Activated CD8-positive, alpha-beta T cell treated with anti-CD3 and anti-CD28 coated beads for 36 hours (primary cell): ENCODE measurements at regions of chr16 and their contacts with region 1.

Region 1: GRCh38 chr16:72066747-72067146 is 3.7 kb downstream of the HPR start:
- DNase-seq: no peak
- ATAC-seq: peak; percentile 58
- H3K4me3 Mint-ChIP-seq: no peak overlapping the region
- H3K27ac Mint-ChIP-seq: no peak overlapping the region
- H3K4me1 Mint-ChIP-seq: no peaks in the 10 kb centered on the region
- H3K27me3 Mint-ChIP-seq: no peaks in the 10 kb centered on the region
- CTCF ChIP-seq: peak; percentile 33

Region 2: GRCh38 chr16:71985262-71985974 is 81.3 kb before region 1 on chr16:
- CTCF ChIA-PET with region 1: no interaction called
- POLR2A ChIA-PET with region 1: no interaction called
- intact Hi-C with region 1: no loop called
- DNase-seq: no peak
- ATAC-seq: no peak
- H3K4me3 Mint-ChIP-seq: no peak overlapping the region
- H3K27ac Mint-ChIP-seq: no peak overlapping the region
- H3K4me1 Mint-ChIP-seq: no peaks in the 10 kb centered on the region
- H3K27me3 Mint-ChIP-seq: peaks cover 23% of the 10 kb centered on the region
- CTCF ChIP-seq: no peak

Region 3: DNA sequence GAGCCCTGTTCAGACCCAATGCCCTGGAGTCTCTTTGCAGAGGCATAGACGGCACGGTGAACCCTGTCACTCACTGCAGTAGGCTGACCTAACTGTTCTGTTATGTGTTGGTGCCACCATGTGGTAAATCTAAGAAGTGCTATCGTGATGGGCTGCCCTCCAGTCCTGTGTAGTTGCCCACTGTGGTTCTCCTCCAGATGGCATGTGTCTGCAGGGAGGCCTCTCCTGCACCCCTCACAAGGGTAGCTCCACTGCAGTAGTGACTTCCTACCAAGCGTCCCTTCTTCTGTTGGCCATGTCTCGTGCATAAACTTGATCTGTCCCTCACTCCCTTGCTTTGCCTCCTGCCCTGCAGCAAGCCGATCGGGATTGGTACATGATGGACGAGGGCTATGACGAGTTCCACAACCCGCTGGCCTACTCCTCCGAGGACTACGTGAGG is 32.7 kb after region 1 on chr16:
- CTCF ChIA-PET with region 1: interaction called, 10 read pairs
- POLR2A ChIA-PET with region 1: interaction called, 3 read pairs
- intact Hi-C with region 1: loop called (anchors 5 kb)
- DNase-seq: peak; percentile 72
- ATAC-seq: peak; percentile 97
- H3K4me3 Mint-ChIP-seq: no peak overlapping the region
- H3K27ac Mint-ChIP-seq: no peak overlapping the region
- H3K4me1 Mint-ChIP-seq: peaks cover 21% of the 10 kb centered on the region
- H3K27me3 Mint-ChIP-seq: no peaks in the 10 kb centered on the region
- CTCF ChIP-seq: peak; percentile 60

Region 4: DNA sequence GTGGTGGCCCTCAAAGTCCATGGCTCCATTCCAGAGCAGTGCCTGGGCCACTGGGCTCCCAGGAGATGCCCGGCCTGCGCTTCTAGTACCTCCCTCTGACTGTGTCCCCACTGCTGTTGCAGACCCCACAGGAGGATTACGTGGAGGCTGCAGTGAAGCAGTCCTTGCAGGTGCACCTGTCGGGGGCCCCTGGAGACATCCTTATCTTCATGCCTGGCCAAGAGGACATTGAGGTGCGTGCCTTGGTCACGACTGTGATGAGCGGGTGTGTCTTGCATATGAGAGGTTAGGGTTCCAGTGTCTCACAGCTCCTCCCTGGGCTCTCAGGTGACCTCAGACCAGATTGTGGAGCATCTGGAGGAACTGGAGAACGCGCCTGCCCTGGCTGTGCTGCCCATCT is 38.2 kb after region 1 on chr16:
- CTCF ChIA-PET with region 1: interaction called, 10 read pairs
- POLR2A ChIA-PET with region 1: no interaction called
- intact Hi-C with region 1: loop called (anchors 5 kb)
- DNase-seq: no peak
- ATAC-seq: no peak
- H3K4me3 Mint-ChIP-seq: no peak overlapping the region
- H3K27ac Mint-ChIP-seq: no peak overlapping the region
- H3K4me1 Mint-ChIP-seq: no peaks in the 10 kb centered on the region
- H3K27me3 Mint-ChIP-seq: no peaks in the 10 kb centered on the region
- CTCF ChIP-seq: no peak

Region 5: DNA sequence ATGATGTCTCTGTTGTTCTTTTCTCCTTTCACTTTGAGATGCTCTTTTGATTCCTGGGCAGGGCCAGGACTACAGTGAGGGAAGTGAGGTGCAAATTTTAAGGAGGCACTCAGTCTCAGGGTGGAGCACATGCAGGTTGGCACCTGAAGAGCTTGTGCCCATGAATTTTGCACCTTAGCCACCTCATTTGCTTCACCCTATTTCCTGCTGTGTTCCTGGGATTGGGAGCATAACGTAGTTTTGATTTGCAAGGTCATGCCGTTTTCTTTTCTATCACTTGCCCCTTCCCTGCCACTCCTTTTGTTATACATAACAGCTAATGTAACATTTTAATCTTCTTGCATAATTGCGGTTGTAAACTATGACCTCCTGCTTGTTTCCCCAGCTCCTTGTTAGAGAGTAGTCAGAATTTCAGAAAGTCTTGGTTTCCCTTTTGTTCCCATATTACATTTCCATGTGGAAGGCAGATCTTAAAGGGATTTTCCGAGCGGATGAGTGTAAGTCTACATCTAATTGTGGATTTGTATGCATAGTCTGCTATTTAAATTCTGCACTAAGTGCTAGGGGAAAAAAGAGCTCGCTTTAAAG is 95.5 kb after region 1 on chr16:
- CTCF ChIA-PET with region 1: no interaction called
- POLR2A ChIA-PET with region 1: no interaction called
- intact Hi-C with region 1: no loop called
- DNase-seq: no peak
- ATAC-seq: no peak
- H3K4me3 Mint-ChIP-seq: no peak overlapping the region
- H3K27ac Mint-ChIP-seq: no peak overlapping the region
- H3K4me1 Mint-ChIP-seq: no peaks in the 10 kb centered on the region
- H3K27me3 Mint-ChIP-seq: no peaks in the 10 kb centered on the region
- CTCF ChIP-seq: no peak